ENCODE measurements at regions of chr19 and their contacts with region 1.

Region 1: DNA sequence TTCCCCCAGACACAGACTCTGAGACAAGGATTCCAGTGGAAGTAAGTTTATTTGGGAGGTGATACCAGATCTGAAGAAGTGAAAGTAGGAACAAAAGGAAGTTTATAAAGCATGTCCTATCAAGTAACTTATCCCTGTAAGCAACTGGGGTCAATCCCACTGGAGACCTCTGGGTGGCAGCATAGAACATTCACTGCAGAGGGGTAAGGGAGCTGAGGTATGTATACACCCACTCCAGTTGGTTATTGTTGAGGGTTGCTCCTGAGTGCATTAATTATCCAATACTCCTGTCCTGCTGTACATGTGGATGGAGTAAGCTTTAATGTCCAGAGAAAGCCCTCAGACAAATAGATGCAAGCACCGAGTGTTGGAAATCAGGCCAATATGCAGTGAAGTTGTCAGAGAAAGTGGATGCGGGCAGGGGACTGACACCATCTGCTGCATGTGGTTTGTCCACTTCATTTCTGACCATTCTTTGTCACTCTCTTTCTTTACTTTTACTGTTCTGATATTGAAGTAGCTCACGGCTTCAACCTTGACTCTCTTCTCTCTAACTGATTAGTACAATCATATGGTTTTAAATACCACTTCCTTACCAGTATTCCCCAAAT is 46.7 kb downstream of the NOTCH3 start:
- DNase-seq: no peak
- ATAC-seq: peak; percentile 64
- H3K4me3 ChIP-seq: no peak overlapping the region
- H3K27ac ChIP-seq: no peak overlapping the region
- H3K4me1 ChIP-seq: no peaks in the 10 kb centered on the region
- H3K27me3 ChIP-seq: no peaks in the 10 kb centered on the region
- CTCF ChIP-seq: peak; percentile 28 to 67

Region 2: DNA sequence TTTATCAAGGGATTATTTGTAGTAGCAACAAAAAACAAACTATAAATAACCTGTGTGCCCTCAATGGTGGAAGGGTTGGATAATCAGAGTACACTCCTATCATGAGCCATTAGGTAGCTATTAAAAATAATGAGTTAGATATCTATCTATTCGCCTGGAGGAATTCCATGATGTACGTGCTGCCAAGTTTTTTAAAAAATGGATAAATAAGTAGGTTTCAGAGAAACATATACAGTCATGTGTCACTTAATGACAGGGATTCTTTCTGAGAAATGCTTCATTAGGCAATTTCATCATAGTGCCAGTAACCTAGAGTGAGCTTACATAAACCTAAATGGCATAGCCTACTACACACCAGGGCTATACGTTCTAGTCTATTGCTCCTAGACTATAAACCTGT is 78.3 kb before region 1 on chr19:
- intact Hi-C with region 1: no loop called
- DNase-seq: no peak
- ATAC-seq: no peak
- H3K4me3 ChIP-seq: no peak overlapping the region
- H3K27ac ChIP-seq: no peak overlapping the region
- H3K4me1 ChIP-seq: no peaks in the 10 kb centered on the region
- H3K27me3 ChIP-seq: peaks cover 0 to 17% of the 10 kb centered on the region in 2 donors
- CTCF ChIP-seq: no peak

Region 3: GRCh38 chr19:15101479-15102082 is 52.5 kb before region 1 on chr19:
- intact Hi-C with region 1: loop called in 1 of 2 experiments (anchors 5 kb)
- DNase-seq: peak in 1 of 4 donors; percentile 36
- ATAC-seq: peak; percentile 82
- H3K4me3 ChIP-seq: no peak overlapping the region
- H3K27ac ChIP-seq: no peak overlapping the region
- H3K4me1 ChIP-seq: no peaks in the 10 kb centered on the region
- H3K27me3 ChIP-seq: peaks cover 0 to 9% of the 10 kb centered on the region in 2 donors
- CTCF ChIP-seq: peak; percentile 67 to 76

Measured in left lung (tissue), 14 donors.